ENCODE measurements at regions of chr11 and their contacts with region 1.

Region 1: DNA sequence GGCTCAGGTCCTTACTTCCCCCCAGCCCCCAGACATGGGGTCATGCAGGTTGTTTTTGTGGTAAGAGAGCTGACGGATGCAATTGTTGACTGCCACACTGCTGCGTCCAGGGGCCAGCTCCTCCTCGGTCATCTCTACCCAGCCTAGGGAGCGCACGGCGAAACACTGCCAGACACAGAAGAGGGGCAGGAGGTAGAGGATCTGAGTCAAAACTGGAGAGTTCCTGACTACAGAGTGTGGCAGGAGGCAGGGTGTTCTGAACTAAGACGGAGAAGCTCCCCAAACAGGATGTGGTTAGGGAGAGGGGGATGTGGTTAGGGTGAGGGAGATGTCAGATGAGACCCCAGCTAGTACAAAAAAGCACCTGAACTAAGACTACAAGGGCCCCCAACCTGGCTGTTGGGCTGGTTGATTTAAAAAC is 12.3 kb downstream of the SMPD1 start:
- DNase-seq: peak; percentile 51 to 94 (median 83)
- ATAC-seq: peak; percentile 87 to 89 (median 88)
- H3K4me3 ChIP-seq: peak overlapping the region in 1 of 2 donors; percentile 38
- H3K4me3 Mint-ChIP-seq: peak overlapping the region; percentile 73 to 92 (median 78)
- H3K27ac ChIP-seq: peak overlapping the region; percentile 90
- H3K27ac Mint-ChIP-seq: peak overlapping the region; percentile 96 to 99
- H3K4me1 ChIP-seq: peaks cover 62 to 75% of the 10 kb centered on the region in 2 experiments
- H3K4me1 Mint-ChIP-seq: peaks cover 93 to 98% (median 94%) of the 10 kb centered on the region in 3 donors
- H3K27me3 ChIP-seq: no peaks in the 10 kb centered on the region
- H3K27me3 Mint-ChIP-seq: no peaks in the 10 kb centered on the region

Region 2: DNA sequence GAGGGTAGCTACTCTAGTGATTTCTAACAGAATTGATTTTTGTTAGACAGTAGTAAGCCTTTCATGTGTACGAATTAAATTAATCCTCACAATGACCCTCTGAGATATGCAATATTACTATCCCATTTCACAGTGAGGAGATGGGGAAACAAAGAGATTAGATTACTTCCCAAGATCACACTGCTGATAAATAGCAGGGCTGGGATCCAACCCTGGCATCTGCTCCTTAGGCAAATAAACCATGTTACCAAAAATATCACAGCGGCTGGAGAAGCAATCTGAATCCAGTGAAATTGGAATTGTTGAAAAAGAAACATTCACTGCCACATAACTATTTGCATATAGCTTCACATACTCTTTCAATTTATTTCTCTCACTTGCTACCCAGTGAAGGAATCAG is 69.5 kb before region 1 on chr11:
- CTCF ChIA-PET with region 1: no interaction called
- POLR2A ChIA-PET with region 1: no interaction called
- DNase-seq: no peak
- ATAC-seq: no peak
- H3K4me3 ChIP-seq: no peak overlapping the region
- H3K4me3 Mint-ChIP-seq: no peak overlapping the region
- H3K27ac ChIP-seq: no peak overlapping the region
- H3K27ac Mint-ChIP-seq: no peak overlapping the region
- H3K4me1 ChIP-seq: no peaks in the 10 kb centered on the region
- H3K4me1 Mint-ChIP-seq: no peaks in the 10 kb centered on the region
- H3K27me3 ChIP-seq: peaks cover 6 to 10% of the 10 kb centered on the region in 2 experiments
- H3K27me3 Mint-ChIP-seq: peaks cover 8 to 12% of the 10 kb centered on the region in 2 donors

Region 3: GRCh38 chr11:6413791-6414201 is 11.2 kb after region 1 on chr11:
- CTCF ChIA-PET with region 1: interaction called, 3 to 12 read pairs
- POLR2A ChIA-PET with region 1: interaction called, 6 to 11 read pairs
- DNase-seq: peak; percentile 38 to 84 (median 72)
- ATAC-seq: peak; percentile 87 to 92 (median 88)
- H3K4me3 ChIP-seq: peak overlapping the region; percentile 8 to 18
- H3K4me3 Mint-ChIP-seq: no peak overlapping the region
- H3K27ac ChIP-seq: peak overlapping the region; percentile 69
- H3K27ac Mint-ChIP-seq: no peak overlapping the region
- H3K4me1 ChIP-seq: peaks cover 41 to 84% of the 10 kb centered on the region in 2 experiments
- H3K4me1 Mint-ChIP-seq: peaks cover 13 to 39% (median 37%) of the 10 kb centered on the region in 3 donors
- H3K27me3 ChIP-seq: no peaks in the 10 kb centered on the region
- H3K27me3 Mint-ChIP-seq: no peaks in the 10 kb centered on the region

Region 4: DNA sequence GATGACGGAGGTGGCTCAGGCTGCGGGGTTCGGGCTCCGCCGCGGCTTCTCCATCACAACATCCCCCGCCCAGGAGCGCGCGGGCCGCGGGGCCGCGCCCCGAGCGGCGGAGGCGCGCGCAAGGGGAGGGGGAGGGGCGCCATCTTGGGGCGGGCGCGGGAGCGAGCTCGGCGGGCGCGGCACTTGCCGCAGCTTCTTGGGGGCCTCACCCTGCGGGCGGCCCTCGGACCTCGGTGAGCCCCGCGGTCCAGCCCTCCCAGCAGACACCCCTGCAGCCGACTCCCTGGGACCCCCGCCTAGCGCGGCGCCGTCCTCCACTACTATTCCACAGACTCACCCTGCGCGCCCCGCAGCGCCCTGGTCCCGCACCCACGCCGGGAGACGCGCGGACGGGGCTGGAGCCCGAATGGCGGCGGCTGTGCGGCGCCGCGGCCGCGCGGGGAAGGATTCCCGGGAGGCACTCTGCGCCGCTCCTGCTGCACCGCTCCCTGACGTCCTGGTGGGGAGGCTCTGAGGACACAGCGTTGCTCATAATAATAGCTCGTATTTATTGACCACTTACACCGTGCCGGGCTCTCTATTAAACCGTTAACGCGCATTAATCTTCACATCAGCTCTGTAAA is 16.5 kb after region 1 on chr11 and contains the start of gene APBB1:
- CTCF ChIA-PET with region 1: interaction called, 3 to 12 read pairs
- POLR2A ChIA-PET with region 1: interaction called, 7 to 11 read pairs
- DNase-seq: peak; percentile 51 to 88 (median 73)
- ATAC-seq: peak; percentile 70 to 82 (median 78)
- H3K4me3 ChIP-seq: peak within 1 kb of the TSS; percentile 64 to 75
- H3K4me3 Mint-ChIP-seq: peak within 1 kb of the TSS in 1 of 3 donors; percentile 86
- H3K27ac ChIP-seq: peak within 1 kb of the TSS; percentile 57
- H3K27ac Mint-ChIP-seq: peak within 1 kb of the TSS; percentile 89
- H3K4me1 ChIP-seq: peaks cover 36 to 50% of the 10 kb centered on the region in 2 experiments
- H3K4me1 Mint-ChIP-seq: peaks cover 9 to 19% (median 15%) of the 10 kb centered on the region in 3 donors
- H3K27me3 ChIP-seq: peaks cover 0 to 2% of the 10 kb centered on the region in 2 experiments
- H3K27me3 Mint-ChIP-seq: peaks cover 0 to 19% of the 10 kb centered on the region in 2 donors
- total RNA-seq, gene APBB1: 71.3 to 152 (median 106) TPM

Measured in T-cell (primary cell).